ENCODE measurements at regions of chr13 and their contacts with region 1.

Region 1: DNA sequence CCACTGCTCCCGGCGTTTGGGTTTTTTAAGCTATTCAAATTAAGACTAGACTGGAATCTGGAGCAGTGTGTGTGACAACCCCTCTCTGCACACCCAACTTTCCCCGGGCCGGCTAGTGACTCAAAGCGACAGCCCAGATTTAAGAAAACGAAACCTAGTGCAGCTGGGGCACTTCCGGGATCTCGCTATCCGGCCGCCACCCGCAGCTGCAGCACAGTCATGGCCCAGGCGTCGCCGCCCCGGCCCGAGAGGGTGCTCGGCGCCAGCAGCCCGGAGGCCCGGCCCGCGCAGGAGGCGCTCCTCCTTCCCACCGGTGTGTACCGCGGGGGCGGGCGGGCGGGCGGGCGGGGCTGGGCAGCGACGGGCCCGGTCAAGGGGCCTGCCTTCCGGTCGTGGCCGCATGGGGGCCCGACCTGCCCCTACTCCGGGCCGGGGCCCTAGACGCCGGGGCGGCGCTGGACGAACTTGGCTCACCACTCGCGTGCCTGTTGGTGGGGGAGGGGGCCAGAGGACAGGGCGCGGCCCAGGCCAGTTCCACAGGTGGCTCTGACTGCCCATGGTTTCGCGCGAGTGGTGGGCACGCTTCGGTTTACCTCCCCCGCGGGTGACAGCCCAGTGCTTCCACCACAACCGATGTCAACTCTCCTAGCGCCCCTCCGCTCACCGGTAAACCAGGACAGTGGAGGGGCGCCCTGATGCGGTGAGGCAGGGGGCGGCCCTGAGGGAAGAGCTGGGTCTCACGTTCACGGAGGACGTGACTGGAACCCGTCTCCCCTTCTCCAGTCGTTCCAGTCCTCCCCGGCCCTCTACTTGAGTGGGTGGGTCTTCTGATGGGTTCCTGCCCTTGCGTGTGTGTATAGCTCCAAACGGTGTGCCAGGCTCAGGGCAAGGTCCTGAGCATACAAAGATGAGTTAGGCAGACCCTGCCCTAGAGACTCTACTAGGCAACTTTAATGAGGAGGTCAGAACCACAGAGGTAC is at the start of gene PHF11:
- DNase-seq: peak; percentile 66 to 86 (median 83)
- ATAC-seq: peak; percentile 90
- H3K4me3 ChIP-seq: peak within 1 kb of the TSS; percentile 77
- H3K4me3 Mint-ChIP-seq: peak within 1 kb of the TSS; percentile 91 to 99 (median 97)
- H3K27ac ChIP-seq: peak within 1 kb of the TSS; percentile 90
- H3K27ac Mint-ChIP-seq: peak within 1 kb of the TSS; percentile 81 to 100 (median 99)
- H3K4me1 ChIP-seq: peaks cover 25 to 34% of the 10 kb centered on the region in 2 donors
- H3K4me1 Mint-ChIP-seq: peaks cover 34 to 59% (median 53%) of the 10 kb centered on the region in 7 donors
- H3K27me3 ChIP-seq: no peaks in the 10 kb centered on the region
- H3K27me3 Mint-ChIP-seq: no peaks in the 10 kb centered on the region
- total RNA-seq, gene PHF11: 96.0 to 132 (median 126) TPM

Region 2: DNA sequence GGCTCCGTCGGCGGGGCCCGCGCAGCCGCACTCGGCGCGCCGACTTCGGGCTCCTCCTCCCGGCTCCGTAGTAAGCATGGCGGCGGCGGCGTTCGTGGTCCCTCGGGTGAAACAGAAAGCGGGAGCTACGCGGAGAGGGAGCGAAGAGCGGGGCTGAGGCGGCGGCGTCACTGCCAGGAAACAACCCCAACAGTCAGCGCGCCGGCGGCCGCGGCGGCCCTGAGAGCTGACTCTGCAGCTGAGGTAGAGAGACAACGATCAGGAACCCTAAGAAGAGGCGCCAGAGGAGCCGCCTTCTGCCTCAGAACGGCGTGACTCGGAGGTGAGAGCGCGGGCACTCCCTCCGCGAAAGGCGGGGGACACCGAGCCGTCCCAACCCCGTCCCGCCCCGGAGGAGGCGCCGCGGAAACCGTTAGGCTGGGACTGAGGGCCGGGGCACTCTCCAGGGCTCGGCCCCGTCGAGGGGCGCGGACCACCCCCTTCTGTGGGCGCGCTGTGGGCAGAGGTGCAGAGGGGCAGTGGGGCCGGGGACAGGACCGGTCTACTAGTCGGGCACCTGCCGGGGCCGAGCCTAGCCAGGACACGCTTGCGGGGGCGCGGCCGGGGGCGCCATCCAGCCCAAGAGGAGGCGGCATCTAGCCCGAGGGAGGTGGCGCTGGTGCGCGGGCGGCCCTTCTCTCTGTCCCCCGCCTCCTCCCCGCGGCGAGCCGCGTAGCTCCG is 520.1 kb before region 1 on chr13 and contains the start of gene FNDC3A:
- CTCF ChIA-PET with region 1: no interaction called
- POLR2A ChIA-PET with region 1: no interaction called
- intact Hi-C with region 1: loop called in 1 of 2 experiments (anchors 1 kb)
- DNase-seq: peak; percentile 84 to 90 (median 86)
- ATAC-seq: peak; percentile 87
- H3K4me3 ChIP-seq: peak within 1 kb of the TSS; percentile 82
- H3K4me3 Mint-ChIP-seq: peak within 1 kb of the TSS; percentile 92 to 100 (median 98)
- H3K27ac ChIP-seq: peak within 1 kb of the TSS; percentile 95
- H3K27ac Mint-ChIP-seq: peak within 1 kb of the TSS; percentile 93 to 99 (median 99)
- H3K4me1 ChIP-seq: peaks cover 13 to 28% of the 10 kb centered on the region in 2 donors
- H3K4me1 Mint-ChIP-seq: peaks cover 35 to 69% (median 49%) of the 10 kb centered on the region in 7 donors
- H3K27me3 ChIP-seq: no peaks in the 10 kb centered on the region
- H3K27me3 Mint-ChIP-seq: peaks cover 0 to 6% (median 0%) of the 10 kb centered on the region in 5 donors
- total RNA-seq, gene FNDC3A: 34.2 to 46.4 (median 39.1) TPM

Region 3: DNA sequence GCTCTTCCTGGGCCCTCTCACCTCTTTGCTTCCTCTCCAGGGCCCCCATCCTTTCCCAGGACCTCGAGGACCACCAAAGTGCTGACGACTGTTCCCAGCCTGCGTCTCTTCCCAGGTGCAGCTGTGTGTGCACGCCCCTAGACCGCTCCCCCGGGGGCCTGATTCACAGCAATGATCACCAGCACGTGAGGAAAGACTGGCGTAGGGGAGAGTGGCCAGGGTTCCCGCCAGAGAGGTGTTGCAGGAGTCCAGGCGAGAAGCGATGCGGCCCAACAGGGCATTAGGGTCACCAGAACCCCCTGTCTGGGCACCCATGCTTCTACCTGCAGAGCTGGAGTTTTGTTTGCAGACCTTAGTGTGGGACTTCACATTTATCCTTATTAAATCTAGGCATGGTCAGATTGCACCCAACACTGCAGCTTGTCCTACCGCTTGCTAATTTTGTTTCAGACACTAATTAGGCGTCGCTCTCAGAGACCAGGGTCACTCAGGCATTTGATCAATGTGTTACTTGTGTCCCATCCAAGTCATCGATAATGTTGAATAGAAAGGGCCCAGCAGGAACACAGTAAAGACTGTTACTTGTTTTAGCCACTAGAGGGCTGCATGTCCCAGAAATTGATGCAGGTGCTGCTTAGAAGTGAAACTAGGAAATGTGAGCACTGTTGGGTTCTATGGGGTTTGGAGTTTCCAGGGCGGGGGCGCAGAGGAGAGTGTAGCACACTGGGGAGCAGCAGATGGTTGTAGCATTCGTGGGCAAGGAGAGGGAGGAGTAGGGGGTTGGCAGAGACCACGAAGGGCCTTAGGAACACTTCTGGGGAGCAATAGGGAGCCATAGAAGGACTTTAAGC is 195.1 kb before region 1 on chr13:
- CTCF ChIA-PET with region 1: no interaction called
- POLR2A ChIA-PET with region 1: interaction called, 3 read pairs
- intact Hi-C with region 1: loop called (anchors 1 kb)
- DNase-seq: peak in 8 of 9 donors; percentile 67 to 82 (median 75)
- ATAC-seq: peak; percentile 96
- H3K4me3 ChIP-seq: peak overlapping the region; percentile 67
- H3K4me3 Mint-ChIP-seq: peak overlapping the region; percentile 63 to 90 (median 80)
- H3K27ac ChIP-seq: no peak overlapping the region
- H3K27ac Mint-ChIP-seq: peak overlapping the region; percentile 16 to 82 (median 71)
- H3K4me1 ChIP-seq: no peaks in the 10 kb centered on the region
- H3K4me1 Mint-ChIP-seq: peaks cover 8 to 28% (median 14%) of the 10 kb centered on the region in 7 donors
- H3K27me3 ChIP-seq: no peaks in the 10 kb centered on the region
- H3K27me3 Mint-ChIP-seq: no peaks in the 10 kb centered on the region

Region 4: GRCh38 chr13:49436890-49437289 is 59.2 kb before region 1 on chr13:
- CTCF ChIA-PET with region 1: no interaction called
- POLR2A ChIA-PET with region 1: no interaction called
- intact Hi-C with region 1: no loop called
- DNase-seq: peak in 3 of 9 donors; percentile 15 to 32 (median 27)
- ATAC-seq: no peak
- H3K4me3 ChIP-seq: no peak overlapping the region
- H3K4me3 Mint-ChIP-seq: no peak overlapping the region
- H3K27ac ChIP-seq: no peak overlapping the region
- H3K27ac Mint-ChIP-seq: peak overlapping the region in 1 of 9 donors; percentile 45
- H3K4me1 ChIP-seq: no peaks in the 10 kb centered on the region
- H3K4me1 Mint-ChIP-seq: peaks cover 0 to 6% (median 0%) of the 10 kb centered on the region in 7 donors
- H3K27me3 ChIP-seq: no peaks in the 10 kb centered on the region
- H3K27me3 Mint-ChIP-seq: no peaks in the 10 kb centered on the region

Region 5: DNA sequence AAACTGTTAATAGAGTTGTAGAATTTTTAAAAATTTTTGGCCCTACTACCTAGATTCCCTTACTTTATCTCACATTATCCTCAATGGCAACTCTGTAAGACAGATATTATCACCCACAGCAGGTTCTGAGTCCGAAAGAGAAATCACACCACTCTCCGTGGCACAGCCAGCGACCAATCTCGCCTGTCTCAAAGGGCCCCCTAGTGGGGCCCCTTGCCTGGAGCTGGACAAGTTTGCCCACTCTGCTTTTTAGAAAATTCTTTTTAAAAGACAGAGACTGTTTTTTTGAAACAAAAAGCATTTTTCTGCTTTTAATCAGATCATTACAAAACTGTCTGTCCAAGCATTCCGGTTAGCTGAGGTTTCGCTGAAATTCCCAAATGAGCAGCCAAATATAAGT is 21.4 kb after region 1 on chr13:
- CTCF ChIA-PET with region 1: no interaction called
- POLR2A ChIA-PET with region 1: interaction called, 3 read pairs
- intact Hi-C with region 1: loop called in 1 of 2 experiments (anchors 2 kb)
- DNase-seq: no peak
- ATAC-seq: no peak
- H3K4me3 ChIP-seq: no peak overlapping the region
- H3K4me3 Mint-ChIP-seq: no peak overlapping the region
- H3K27ac ChIP-seq: no peak overlapping the region
- H3K27ac Mint-ChIP-seq: peak overlapping the region in 3 of 9 donors; percentile 10 to 65 (median 52)
- H3K4me1 ChIP-seq: no peaks in the 10 kb centered on the region
- H3K4me1 Mint-ChIP-seq: peaks cover 6 to 18% (median 13%) of the 10 kb centered on the region in 7 donors
- H3K27me3 ChIP-seq: no peaks in the 10 kb centered on the region
- H3K27me3 Mint-ChIP-seq: no peaks in the 10 kb centered on the region

Region 6: GRCh38 chr13:49606747-49607648 is 110.9 kb after region 1 on chr13:
- CTCF ChIA-PET with region 1: interaction called, 3 read pairs
- POLR2A ChIA-PET with region 1: interaction called, 3 read pairs
- intact Hi-C with region 1: loop called in 1 of 2 experiments (anchors 1 kb)
- DNase-seq: peak; percentile 57 to 80 (median 72)
- ATAC-seq: peak; percentile 98
- H3K4me3 ChIP-seq: peak overlapping the region; percentile 49
- H3K4me3 Mint-ChIP-seq: peak overlapping the region; percentile 62 to 92 (median 87)
- H3K27ac ChIP-seq: no peak overlapping the region
- H3K27ac Mint-ChIP-seq: peak overlapping the region in 8 of 9 donors; percentile 43 to 91 (median 75)
- H3K4me1 ChIP-seq: no peaks in the 10 kb centered on the region
- H3K4me1 Mint-ChIP-seq: peaks cover 0 to 7% (median 4%) of the 10 kb centered on the region in 7 donors
- H3K27me3 ChIP-seq: no peaks in the 10 kb centered on the region
- H3K27me3 Mint-ChIP-seq: peaks cover 0 to 5% (median 0%) of the 10 kb centered on the region in 5 donors

Region 7: DNA sequence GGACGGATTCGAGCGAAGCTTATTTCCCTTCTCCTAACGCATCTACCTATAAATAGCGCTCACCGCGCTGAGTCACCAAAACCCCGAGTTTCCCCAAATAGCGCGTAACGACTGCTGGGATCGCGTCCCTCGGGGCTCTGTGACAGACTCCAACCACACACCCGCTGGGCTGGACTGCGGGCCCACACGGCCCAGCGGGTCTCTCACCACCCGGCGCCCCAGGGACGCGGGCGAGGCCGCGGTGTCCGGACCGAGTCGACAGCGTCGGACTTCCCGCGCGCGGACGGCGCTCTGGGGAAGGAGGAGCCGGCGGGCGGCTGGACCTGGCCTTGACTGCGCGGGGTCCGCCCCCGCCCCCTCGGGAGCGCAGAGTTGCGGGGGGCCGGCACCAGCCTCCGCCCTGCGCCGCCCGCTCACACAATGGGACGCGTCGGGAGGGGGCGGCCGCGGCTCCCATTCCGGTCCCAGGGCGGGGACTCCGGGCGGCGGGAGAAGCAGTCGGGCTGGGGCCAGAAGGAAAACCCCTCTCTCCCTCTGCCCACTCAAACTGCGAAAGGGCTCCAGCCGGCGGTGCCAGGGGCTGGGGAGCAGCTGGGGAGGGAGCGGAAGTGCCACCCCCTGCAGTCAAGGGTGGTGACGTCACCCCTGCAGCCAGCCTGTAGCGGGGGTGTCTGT is 627.9 kb after region 1 on chr13:
- CTCF ChIA-PET with region 1: interaction called, 3 read pairs
- POLR2A ChIA-PET with region 1: no interaction called
- intact Hi-C with region 1: loop called in 1 of 2 experiments (anchors 5 kb)
- DNase-seq: peak in 7 of 9 donors; percentile 46 to 88 (median 64)
- ATAC-seq: peak; percentile 82
- H3K4me3 ChIP-seq: peak overlapping the region; percentile 52
- H3K4me3 Mint-ChIP-seq: peak overlapping the region; percentile 86 to 96 (median 93)
- H3K27ac ChIP-seq: peak overlapping the region; percentile 95
- H3K27ac Mint-ChIP-seq: peak overlapping the region; percentile 90 to 99 (median 97)
- H3K4me1 ChIP-seq: peaks cover 24 to 29% of the 10 kb centered on the region in 2 donors
- H3K4me1 Mint-ChIP-seq: peaks cover 25 to 61% (median 50%) of the 10 kb centered on the region in 7 donors
- H3K27me3 ChIP-seq: peaks cover 0 to 11% of the 10 kb centered on the region in 2 donors
- H3K27me3 Mint-ChIP-seq: peaks cover 1 to 15% (median 12%) of the 10 kb centered on the region in 5 donors